Activated CD4-positive, alpha-beta memory T cell treated with anti-CD3 and anti-CD28 coated beads for 36 hours (primary cell): ENCODE measurements at regions of chr6 and their contacts with region 1.

Region 1: GRCh38 chr6:116779573-116780164 is 14.2 kb upstream of the FAM162B start:
- DNase-seq: no peak
- H3K4me3 Mint-ChIP-seq: no peak overlapping the region
- H3K27ac Mint-ChIP-seq: no peak overlapping the region
- H3K4me1 Mint-ChIP-seq: no peaks in the 10 kb centered on the region
- H3K27me3 Mint-ChIP-seq: peaks cover 8% of the 10 kb centered on the region

Region 2: DNA sequence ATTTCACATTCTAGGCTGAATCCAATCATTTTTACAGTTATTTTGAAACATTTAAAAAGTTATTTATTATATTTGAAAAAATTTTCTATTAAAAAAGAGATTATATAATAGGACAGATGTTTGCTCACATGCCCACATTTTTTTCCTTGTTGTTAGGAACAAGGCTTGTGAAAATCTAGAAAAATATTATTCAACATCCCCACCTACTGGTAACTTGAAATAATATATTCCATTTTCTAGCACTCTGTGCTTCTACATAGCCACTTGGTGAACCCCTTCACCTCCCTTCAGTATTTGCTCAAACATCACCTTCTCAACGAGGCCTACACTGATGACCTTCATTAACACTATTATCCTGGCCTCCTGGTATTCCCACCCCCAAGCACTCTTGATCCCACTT is 67.6 kb after region 1 on chr6:
- CTCF ChIA-PET with region 1: interaction called, 3 read pairs
- POLR2A ChIA-PET with region 1: no interaction called
- intact Hi-C with region 1: loop called (anchors 2 kb)
- DNase-seq: no peak
- H3K4me3 Mint-ChIP-seq: no peak overlapping the region
- H3K27ac Mint-ChIP-seq: no peak overlapping the region
- H3K4me1 Mint-ChIP-seq: no peaks in the 10 kb centered on the region
- H3K27me3 Mint-ChIP-seq: peaks cover 1% of the 10 kb centered on the region